HEK293 (cell line): ENCODE measurements at regions of chr10 and their contacts with region 1.

Region 1: GRCh38 chr10:129030996-129031843 is 435.8 kb upstream of the MGMT start:
- H3K4me3 ChIP-seq: no peak overlapping the region
- H3K27ac ChIP-seq: no peak overlapping the region
- H3K4me1 ChIP-seq: peaks cover 4% of the 10 kb centered on the region; the same call in 1 of the 2 replicates
- CTCF ChIP-seq: peak; percentile 96

Region 2: GRCh38 chr10:129332476-129332875 is 301.3 kb after region 1 on chr10:
- CTCF ChIA-PET with region 1: interaction called, 37 read pairs
- POLR2A ChIA-PET with region 1: no interaction called
- H3K4me3 ChIP-seq: no peak overlapping the region
- H3K27ac ChIP-seq: no peak overlapping the region
- H3K4me1 ChIP-seq: no peaks in the 10 kb centered on the region
- CTCF ChIP-seq: no peak

Region 3: GRCh38 chr10:129971381-129972144 is 940.3 kb after region 1 on chr10:
- CTCF ChIA-PET with region 1: interaction called, 18 read pairs
- POLR2A ChIA-PET with region 1: no interaction called
- H3K4me3 ChIP-seq: peak overlapping the region; percentile 38
- H3K27ac ChIP-seq: no peak overlapping the region; the same call in 1 of the 2 replicates
- H3K4me1 ChIP-seq: peaks cover 10% of the 10 kb centered on the region; the same call in 1 of the 2 replicates
- CTCF ChIP-seq: peak; percentile 77